ENCODE measurements at regions of chrX and their contacts with region 1.

Region 1: DNA sequence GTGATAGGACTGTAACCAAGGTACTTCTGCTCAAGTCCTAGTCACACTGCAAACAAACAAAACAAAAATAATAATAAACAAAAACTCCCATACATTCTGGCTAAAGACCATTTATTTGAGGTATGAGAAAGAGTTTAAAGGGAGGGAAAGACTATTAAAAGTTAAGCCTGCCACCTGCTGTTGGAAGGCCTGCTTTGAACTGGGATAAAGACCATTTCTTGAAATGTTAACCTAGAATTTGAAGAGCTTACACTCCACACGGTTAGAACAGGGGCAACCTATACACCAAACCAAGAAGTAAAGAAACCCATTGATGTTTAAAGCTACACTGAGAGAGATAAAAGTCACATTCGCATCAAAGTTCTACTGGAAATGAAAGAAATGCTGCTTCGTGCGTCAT is 548.7 kb upstream of the DIPK2B start:
- DNase-seq: no peak
- H3K4me3 ChIP-seq: no peak overlapping the region
- H3K27ac ChIP-seq: peak overlapping the region; percentile 86
- H3K4me1 ChIP-seq: peaks cover 92% of the 10 kb centered on the region
- H3K27me3 ChIP-seq: no peaks in the 10 kb centered on the region
- CTCF ChIP-seq: peak; percentile 40 to 56

Region 2: DNA sequence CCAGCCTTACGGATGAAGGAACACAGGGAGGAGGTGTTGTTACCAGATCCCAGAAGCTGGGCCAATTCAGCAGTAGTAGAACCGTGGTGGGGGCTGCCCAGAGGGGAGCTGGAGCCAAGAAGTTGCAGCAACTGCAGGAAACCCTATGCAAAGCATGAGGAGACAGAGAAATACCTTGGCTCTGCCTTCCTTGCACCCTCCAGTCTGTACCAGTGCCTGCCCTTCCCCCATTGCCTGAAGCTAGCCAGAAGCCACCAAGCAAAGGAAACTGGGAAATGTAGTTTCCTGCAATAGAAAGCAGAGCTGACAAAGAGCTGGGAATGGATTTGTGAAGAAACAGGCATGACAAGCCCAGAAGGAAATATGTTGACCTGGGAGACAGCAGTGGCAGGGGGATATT is 1098.0 kb before region 1 on chrX:
- CTCF ChIA-PET with region 1: no interaction called
- dilution Hi-C with region 1: no loop called
- in situ Hi-C with region 1: no loop called
- intact Hi-C with region 1: no loop called
- DNase-seq: no peak
- H3K4me3 ChIP-seq: no peak overlapping the region
- H3K27ac ChIP-seq: no peak overlapping the region
- H3K4me1 ChIP-seq: no peaks in the 10 kb centered on the region
- H3K27me3 ChIP-seq: peaks cover 4% of the 10 kb centered on the region
- CTCF ChIP-seq: no peak

Region 3: DNA sequence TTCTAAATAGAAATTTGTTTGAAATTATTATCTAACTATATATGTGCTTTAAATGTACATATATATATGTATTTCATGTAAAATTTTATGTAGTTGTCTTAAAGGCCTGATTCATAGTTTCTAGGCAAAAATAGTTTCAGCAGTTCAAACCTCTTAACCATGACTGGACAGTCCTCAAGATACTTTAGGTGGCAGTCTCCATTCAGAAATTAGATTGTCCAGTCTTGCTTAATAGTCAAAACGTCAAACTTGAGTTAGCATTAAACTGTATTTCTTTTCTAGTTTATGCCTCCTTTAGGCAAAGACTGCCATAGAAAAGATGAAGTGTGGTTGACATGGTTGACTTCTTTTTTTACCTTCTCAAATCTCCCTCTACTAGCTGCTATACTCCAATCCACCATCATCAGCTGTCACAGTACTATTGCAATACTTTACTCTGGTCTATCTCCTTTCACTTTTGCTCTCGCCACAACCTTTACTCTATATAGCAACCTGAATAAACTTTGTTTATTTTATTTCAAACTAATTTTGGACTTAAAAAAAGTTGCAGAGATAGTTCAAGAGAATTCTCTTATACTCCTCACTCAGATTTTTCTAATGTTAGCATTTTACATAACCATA is 153.1 kb before region 1 on chrX:
- CTCF ChIA-PET with region 1: no interaction called
- dilution Hi-C with region 1: no loop called
- in situ Hi-C with region 1: no loop called
- intact Hi-C with region 1: loop called (anchors 1 kb)
- DNase-seq: no peak
- H3K4me3 ChIP-seq: no peak overlapping the region
- H3K27ac ChIP-seq: no peak overlapping the region
- H3K4me1 ChIP-seq: no peaks in the 10 kb centered on the region
- H3K27me3 ChIP-seq: no peaks in the 10 kb centered on the region
- CTCF ChIP-seq: peak in 1 of 2 donors; percentile 37

Measured in mammary epithelial cell (primary cell).